AG04449 (cell line): ENCODE measurements at regions of chr21 and their contacts with region 1.

Region 1: DNA sequence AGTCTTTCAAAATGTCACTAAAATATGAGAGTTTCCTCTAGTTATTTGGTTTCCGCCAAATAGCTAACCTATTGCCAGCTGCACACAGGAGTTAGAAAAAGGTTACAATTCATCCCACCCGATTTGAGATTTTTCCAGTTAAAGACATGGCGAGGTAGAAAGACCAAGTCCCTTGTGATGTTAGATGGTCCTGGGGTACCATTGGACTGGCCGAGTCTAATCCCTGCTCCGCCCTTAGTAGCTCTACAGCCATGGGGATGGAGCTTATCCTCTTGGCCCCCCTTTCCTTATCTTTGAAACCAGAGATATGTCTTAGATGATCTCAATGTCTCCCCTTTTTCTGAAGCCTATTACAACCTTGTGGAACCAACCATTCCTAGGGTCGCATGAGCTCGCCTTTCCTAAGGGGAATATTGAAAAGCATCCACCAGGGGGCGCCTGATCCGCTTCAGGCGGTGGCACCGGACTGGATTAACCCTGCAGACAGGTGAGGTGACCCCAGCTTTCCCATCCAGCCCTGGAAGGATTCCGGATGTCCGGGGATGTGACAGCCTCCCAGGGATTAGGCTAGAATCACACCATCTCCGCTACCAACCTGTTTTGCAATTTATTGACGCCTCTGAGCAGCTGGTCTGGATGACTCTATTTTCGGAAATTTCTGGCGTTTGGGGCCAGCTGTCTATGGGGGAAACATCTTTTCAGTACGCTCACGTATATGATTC is 68.3 kb upstream of the SIM2 start:
- DNase-seq: no peak
- H3K4me3 ChIP-seq: no peak overlapping the region
- CTCF ChIP-seq: peak; percentile 70

Region 2: DNA sequence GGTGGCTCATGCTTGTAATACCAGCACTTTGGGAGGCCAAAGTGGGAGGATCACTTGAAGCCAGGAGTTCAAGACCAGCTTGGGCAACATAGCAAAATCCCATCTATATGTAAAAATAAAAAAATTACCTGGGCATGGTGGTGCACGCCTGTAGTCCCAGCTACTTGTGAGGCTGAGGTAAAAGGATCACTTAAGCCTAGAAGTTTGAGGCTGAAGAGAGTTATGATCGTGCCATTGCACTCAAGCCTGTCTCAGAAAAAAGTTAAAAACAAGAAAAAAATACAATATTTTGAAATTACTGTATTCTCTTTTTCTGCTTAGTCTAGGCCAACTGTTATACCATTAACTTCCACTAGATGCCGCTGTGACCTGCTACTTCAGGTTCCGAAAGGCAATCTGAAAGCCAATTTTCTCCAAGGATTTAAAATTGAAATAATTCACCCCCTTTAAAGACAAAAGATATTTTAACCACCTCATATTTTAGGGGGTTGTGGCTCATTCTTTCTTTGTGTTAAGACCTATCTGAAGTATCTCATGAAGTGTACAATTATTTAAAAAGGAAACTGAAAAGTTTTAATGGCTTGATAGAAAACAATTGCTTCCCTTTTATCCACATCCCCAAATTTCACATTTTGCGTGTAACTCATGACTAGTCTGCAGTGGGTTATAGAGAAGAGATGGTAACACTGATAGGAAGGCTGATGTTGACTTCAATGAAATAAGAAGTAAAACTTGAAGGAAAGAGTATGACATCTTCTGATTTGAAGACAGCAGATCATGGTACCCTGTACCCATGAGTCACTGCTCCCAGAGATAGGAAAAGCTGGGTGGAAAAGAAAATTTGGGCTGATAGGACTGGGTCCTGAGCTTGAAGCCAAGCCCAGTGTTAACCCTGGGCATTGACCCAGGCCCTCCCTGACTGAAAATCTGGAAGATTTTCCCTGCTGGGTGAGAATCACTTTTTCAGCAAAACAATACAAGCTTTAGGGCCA is 126.3 kb before region 1 on chr21:
- CTCF ChIA-PET with region 1: interaction called, 14 read pairs
- POLR2A ChIA-PET with region 1: no interaction called
- DNase-seq: no peak
- H3K4me3 ChIP-seq: no peak overlapping the region
- CTCF ChIP-seq: peak; percentile 53

Region 3: DNA sequence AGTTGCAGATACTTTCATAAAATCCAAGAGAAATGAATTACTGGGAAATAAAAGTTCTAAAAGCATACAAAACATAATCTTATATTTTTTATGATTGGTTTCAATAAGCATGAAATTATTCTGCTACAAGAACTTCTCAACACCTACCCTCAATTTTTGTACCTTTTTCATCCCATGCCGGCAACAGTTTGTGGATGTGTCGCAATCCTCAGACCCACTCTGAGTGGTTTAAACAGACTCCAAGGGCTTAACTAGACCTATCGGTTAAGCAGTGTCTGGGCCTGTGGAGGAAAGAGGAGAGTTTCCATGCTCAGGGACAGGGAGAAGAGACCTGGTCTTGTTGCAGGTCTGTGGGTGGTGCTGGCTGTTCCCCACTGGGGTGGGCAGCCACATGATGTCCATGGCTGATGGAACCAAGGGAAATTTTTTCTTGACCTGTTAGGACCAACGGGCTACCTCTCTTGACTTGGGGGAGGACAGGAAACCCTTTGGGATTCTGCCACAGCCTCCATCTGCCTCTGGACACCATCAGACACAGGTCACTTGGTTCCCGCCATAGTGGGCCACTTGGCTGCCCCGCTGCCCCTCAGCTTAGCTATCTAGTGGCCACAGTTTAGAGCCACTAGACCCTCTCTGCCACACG is 69.6 kb before region 1 on chr21:
- CTCF ChIA-PET with region 1: no interaction called
- POLR2A ChIA-PET with region 1: no interaction called
- DNase-seq: no peak
- H3K4me3 ChIP-seq: no peak overlapping the region
- CTCF ChIP-seq: no peak

Region 4: GRCh38 chr21:36640721-36641244 is 10.1 kb after region 1 on chr21:
- CTCF ChIA-PET with region 1: interaction called, 43 read pairs
- POLR2A ChIA-PET with region 1: no interaction called
- DNase-seq: no peak
- H3K4me3 ChIP-seq: no peak overlapping the region
- CTCF ChIP-seq: no peak

Region 5: DNA sequence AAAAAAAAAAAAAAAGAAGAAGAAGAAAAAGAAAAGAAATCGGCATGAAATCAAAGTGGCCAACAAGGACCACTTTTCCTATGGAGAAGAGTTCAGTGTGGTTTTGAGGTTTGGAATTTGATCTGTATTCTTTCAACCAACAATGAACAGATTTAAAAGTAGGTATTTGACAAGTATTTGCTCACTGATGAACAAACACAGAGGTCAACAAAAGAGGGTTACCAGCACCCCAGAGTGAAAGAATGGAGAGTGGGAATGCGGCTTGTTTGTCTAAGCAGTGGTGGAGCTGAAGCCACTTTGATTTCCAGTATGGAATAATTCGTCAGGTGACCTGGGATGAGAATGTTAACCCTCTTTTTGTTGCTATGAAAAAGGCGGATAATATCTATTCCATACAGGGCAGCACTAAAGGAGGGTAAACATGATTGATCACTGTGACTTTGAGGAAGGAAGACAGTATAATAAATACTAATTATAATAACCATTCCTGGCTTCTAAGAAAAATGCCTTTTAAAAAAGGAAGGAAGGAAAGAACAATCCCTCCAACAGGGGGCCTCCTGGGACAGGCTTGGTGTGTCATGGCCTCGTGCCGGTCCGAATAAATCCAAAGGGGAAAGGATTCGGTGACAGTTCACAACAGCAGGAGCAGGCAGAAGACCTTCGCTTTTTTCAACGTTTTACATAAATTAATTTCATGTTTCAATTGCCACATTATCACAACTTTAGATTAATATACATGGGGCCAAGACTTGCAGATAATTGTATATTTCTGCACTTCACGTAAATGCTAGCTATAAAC is 31.1 kb after region 1 on chr21:
- CTCF ChIA-PET with region 1: interaction called, 22 read pairs
- POLR2A ChIA-PET with region 1: no interaction called
- DNase-seq: no peak
- H3K4me3 ChIP-seq: no peak overlapping the region
- CTCF ChIP-seq: peak; percentile 47

Region 6: GRCh38 chr21:36917471-36918158 is 287.0 kb after region 1 on chr21:
- CTCF ChIA-PET with region 1: interaction called, 13 read pairs
- POLR2A ChIA-PET with region 1: no interaction called
- DNase-seq: no peak
- H3K4me3 ChIP-seq: no peak overlapping the region
- CTCF ChIP-seq: peak; percentile 82